Heart right ventricle (tissue), 16 donors: ENCODE measurements at regions of chr10 and their contacts with region 1.

Region 1: DNA sequence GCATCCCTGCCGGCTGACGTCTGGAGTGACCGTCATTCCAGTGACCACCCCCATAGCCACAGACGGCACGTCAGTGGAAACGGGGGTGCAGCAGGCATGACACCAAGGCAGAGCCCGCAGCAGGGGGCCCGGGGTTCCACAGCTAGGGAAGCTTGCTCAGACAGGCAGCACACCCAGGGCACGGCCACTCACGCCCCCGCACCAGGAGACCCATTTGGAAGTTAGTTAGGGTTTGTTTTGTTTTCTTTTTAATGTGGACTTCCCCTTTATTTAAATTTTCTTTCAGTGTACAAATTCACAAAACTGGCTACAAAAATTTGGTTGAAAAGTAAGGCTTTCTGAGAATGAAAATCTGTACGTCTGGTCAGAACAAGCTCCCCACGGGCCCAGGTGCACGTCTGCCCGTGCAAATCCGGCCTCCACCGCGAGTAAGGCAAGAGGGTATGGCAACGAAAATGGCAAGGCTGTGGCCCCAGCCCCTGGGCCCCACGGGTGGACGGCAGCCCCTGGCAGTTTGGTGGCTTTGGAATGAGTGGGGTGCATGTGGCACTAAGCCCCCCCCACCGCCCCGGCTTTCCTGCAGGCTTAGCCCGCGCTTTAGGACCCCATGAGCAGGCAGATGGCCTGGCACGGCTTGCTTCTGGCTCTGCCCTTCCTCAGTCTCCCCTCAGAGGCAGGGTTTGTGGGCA is 124.2 kb downstream of the FAM53B start:
- DNase-seq: no peak
- ATAC-seq: no peak
- H3K4me3 ChIP-seq: no peak overlapping the region
- H3K27ac ChIP-seq: peak overlapping the region in 1 of 10 donors; percentile 58
- H3K4me1 ChIP-seq: peaks cover 18 to 76% (median 45%) of the 10 kb centered on the region in 9 donors
- H3K27me3 ChIP-seq: no peaks in the 10 kb centered on the region
- CTCF ChIP-seq: no peak

Region 2: GRCh38 chr10:124539935-124540641 is 79.9 kb before region 1 on chr10:
- intact Hi-C with region 1: loop called in 6 of 10 experiments (anchors 5 to 10 kb)
- DNase-seq: peak; percentile 70 to 82
- ATAC-seq: peak; percentile 75 to 92 (median 88)
- H3K4me3 ChIP-seq: no peak overlapping the region
- H3K27ac ChIP-seq: no peak overlapping the region
- H3K4me1 ChIP-seq: peaks cover 0 to 25% (median 10%) of the 10 kb centered on the region in 9 donors
- H3K27me3 ChIP-seq: no peaks in the 10 kb centered on the region
- CTCF ChIP-seq: peak; percentile 76 to 95 (median 87)

Region 3: GRCh38 chr10:124641282-124642087 is 21.5 kb after region 1 on chr10:
- intact Hi-C with region 1: no loop called
- DNase-seq: peak; percentile 49 to 77
- ATAC-seq: peak; percentile 51 to 86 (median 76)
- H3K4me3 ChIP-seq: peak overlapping the region in 2 of 10 donors; percentile 16 to 25
- H3K27ac ChIP-seq: peak overlapping the region; percentile 29 to 89 (median 79)
- H3K4me1 ChIP-seq: peaks cover 49 to 100% (median 96%) of the 10 kb centered on the region in 9 donors
- H3K27me3 ChIP-seq: no peaks in the 10 kb centered on the region
- CTCF ChIP-seq: no peak

Region 4: DNA sequence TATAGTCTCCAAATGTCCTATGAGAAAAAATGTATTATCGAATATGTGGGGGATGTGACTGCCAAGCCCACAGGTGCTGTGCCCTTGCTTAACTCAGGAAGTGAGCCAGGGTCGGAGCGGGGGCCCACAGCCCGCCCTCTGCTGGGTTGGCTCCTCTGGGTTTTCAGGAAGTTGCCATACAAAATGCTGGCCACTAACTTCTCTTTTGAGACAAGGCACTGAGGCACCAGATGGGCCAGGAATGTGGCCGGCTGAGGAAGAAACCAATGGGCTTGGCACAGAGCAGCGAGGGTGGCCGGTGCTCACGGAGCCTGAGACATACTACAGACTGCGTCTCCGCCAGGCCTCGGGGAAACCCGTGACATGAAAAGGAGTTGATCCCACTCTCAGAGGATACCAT is 65.3 kb after region 1 on chr10:
- intact Hi-C with region 1: no loop called
- DNase-seq: peak in 1 of 2 donors; percentile 58
- ATAC-seq: peak; percentile 20 to 58 (median 42)
- H3K4me3 ChIP-seq: no peak overlapping the region
- H3K27ac ChIP-seq: peak overlapping the region; percentile 34 to 87 (median 75)
- H3K4me1 ChIP-seq: peaks cover 20 to 99% (median 93%) of the 10 kb centered on the region in 9 donors
- H3K27me3 ChIP-seq: no peaks in the 10 kb centered on the region
- CTCF ChIP-seq: peak in 1 of 9 donors; percentile 10

Region 5: DNA sequence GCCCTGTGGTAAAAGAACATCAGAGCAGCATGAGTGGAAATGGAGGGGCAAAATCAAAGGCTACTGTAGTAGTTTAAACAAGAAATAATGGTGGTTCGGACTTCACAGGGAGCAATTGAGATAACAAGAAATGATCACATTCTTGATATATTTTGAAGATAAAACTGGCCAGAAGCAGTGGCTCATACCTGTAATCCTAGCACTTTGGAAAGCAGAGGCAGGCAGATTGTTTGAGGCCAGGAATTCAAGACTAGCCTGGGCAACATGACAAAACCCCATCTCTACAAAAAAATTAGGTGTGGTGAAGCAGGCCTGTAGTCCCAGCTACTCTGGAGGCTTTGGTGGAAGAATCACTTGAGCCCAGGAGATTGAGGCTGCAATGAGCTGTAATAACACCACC is 148.8 kb after region 1 on chr10:
- intact Hi-C with region 1: no loop called
- DNase-seq: no peak
- ATAC-seq: no peak
- H3K4me3 ChIP-seq: no peak overlapping the region
- H3K27ac ChIP-seq: no peak overlapping the region
- H3K4me1 ChIP-seq: no peaks in the 10 kb centered on the region
- H3K27me3 ChIP-seq: no peaks in the 10 kb centered on the region
- CTCF ChIP-seq: no peak